ENCODE measurements at regions of chr1 and their contacts with region 1.

Region 1: DNA sequence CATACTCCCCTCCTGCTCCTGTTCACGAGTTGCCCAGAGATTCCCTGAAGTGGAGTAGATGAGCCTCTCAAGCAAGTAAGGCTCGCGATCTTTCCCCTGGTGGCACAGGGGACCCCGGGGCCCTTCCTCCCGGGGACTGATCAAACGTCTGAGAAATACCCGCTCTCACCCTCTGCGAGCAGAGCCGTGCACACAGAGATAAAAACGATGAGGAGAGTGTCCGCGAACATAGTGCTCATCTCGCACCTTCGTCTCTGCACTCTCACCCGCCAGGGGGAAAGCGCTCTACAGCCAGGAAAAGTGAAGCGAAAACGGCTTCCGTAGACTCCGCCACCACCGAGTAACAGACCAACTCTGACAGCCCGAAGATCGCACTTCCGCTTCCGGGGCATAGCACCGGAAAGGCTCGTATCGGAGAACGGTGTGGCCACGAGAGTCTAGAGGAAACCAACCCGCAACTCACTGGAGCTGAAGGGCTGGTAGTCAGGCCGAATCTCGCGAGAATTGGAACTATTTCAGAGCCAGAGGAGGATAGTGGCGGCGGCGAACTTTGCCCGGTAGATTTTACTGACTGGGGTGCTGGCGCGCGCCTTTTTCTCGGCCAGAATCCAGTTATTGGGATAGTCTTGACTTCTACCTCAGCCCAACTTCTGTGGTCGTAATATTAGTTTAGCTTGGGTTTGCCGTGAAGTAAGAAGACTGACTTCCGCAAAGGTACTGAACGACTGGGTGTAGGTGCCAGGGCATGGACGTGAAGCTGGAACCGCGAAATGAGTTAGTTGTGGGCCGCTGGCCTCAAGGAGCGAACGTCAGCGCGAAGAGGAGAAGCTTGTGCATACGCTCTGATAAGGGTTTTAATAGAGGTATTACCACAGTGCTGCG is at the start of gene TMCO1:
- DNase-seq: peak; percentile 87 to 99
- ATAC-seq: peak; percentile 93 to 97 (median 97)
- H3K4me3 ChIP-seq: peak within 1 kb of the TSS; percentile 75
- H3K4me3 Mint-ChIP-seq: peak within 1 kb of the TSS; percentile 98
- H3K27ac ChIP-seq: peak within 1 kb of the TSS; percentile 92
- H3K27ac Mint-ChIP-seq: peak within 1 kb of the TSS; percentile 95 to 98
- H3K4me1 ChIP-seq: peaks cover 12% of the 10 kb centered on the region
- H3K4me1 Mint-ChIP-seq: peaks cover 50 to 54% of the 10 kb centered on the region in 2 donors
- H3K27me3 ChIP-seq: no peaks in the 10 kb centered on the region
- H3K27me3 Mint-ChIP-seq: no peaks in the 10 kb centered on the region
- CTCF ChIP-seq: no peak
- total RNA-seq, gene TMCO1: 45.4 to 52.6 (median 47.6) TPM

Region 2: DNA sequence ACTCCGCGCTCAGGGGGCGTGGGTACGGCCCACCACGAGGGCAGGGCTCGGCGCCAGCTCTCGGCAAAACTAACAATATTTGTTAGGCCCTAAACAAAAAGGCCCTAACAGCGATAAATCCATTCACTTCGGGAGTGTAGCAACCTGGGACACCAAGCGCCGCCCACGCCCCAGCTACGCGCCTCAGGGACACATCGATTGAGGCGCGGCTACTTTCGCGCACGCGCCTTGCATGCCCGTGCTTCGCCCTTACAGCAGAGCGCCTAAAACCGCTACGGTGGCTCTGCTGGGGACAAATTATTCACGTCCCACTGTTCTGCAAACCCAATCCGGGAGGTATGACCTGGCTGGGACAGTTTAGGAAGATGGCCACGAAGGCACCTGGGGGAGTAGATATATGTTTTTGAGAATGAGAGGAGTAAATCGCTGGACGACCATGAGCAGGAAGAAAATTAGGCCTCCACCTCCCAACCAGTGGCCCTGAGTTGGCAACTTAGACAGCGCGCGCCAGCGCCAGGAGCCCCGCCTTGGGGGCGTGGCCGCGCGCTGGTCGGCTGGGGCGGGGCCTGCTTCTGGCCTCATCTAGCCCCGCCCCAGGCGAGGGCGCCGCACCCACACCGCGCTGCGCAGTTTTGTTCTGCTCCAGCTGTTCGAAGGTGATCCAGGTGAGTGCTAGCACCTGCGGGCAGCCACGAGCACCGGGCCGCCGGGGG is 138.0 kb before region 1 on chr1 and contains the start of gene MGST3:
- intact Hi-C with region 1: loop called (anchors 2 kb)
- DNase-seq: peak; percentile 90 to 96
- ATAC-seq: peak; percentile 94 to 99 (median 96)
- H3K4me3 ChIP-seq: peak within 1 kb of the TSS; percentile 64
- H3K4me3 Mint-ChIP-seq: no peak within 1 kb of the TSS
- H3K27ac ChIP-seq: peak within 1 kb of the TSS; percentile 89
- H3K27ac Mint-ChIP-seq: no peak within 1 kb of the TSS
- H3K4me1 ChIP-seq: peaks cover 20% of the 10 kb centered on the region
- H3K4me1 Mint-ChIP-seq: peaks cover 0 to 19% of the 10 kb centered on the region in 2 donors
- H3K27me3 ChIP-seq: no peaks in the 10 kb centered on the region
- H3K27me3 Mint-ChIP-seq: no peaks in the 10 kb centered on the region
- CTCF ChIP-seq: no peak
- total RNA-seq, gene MGST3: 27.2 to 34.3 (median 29.0) TPM

Region 3: GRCh38 chr1:165697881-165698760 is 70.6 kb before region 1 on chr1 and contains the start of gene ALDH9A1:
- intact Hi-C with region 1: loop called (anchors 1 kb)
- DNase-seq: peak; percentile 81 to 87
- ATAC-seq: peak; percentile 88 to 95 (median 90)
- H3K4me3 ChIP-seq: peak within 1 kb of the TSS; percentile 70
- H3K4me3 Mint-ChIP-seq: peak within 1 kb of the TSS; percentile 93
- H3K27ac ChIP-seq: peak within 1 kb of the TSS; percentile 84
- H3K27ac Mint-ChIP-seq: peak within 1 kb of the TSS; percentile 97 to 100
- H3K4me1 ChIP-seq: peaks cover 10% of the 10 kb centered on the region
- H3K4me1 Mint-ChIP-seq: peaks cover 21 to 25% of the 10 kb centered on the region in 2 donors
- H3K27me3 ChIP-seq: no peaks in the 10 kb centered on the region
- H3K27me3 Mint-ChIP-seq: no peaks in the 10 kb centered on the region
- CTCF ChIP-seq: no peak
- total RNA-seq, gene ALDH9A1: 38.0 to 57.1 (median 50.3) TPM

Region 4: DNA sequence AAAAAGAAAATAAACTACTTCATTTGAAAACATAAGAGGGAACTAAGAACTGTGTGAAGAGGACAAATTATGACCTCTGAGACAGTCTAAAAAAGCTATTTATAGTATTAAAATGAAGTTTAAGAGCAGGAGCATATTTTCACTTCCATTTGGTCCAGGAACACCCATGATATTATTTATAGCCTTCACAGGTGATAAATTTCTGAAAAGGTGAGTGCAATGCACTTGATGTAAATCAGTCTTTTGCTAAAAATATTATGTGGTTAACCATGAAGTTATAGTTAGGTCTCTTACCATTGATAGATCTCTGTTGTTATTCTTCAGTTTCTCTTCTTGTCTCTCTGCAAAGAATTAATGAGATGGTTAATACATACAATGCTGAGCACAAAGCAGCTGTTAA is 14.8 kb before region 1 on chr1:
- intact Hi-C with region 1: no loop called
- DNase-seq: no peak
- ATAC-seq: no peak
- H3K4me3 ChIP-seq: no peak overlapping the region
- H3K4me3 Mint-ChIP-seq: no peak overlapping the region
- H3K27ac ChIP-seq: no peak overlapping the region
- H3K27ac Mint-ChIP-seq: peak overlapping the region in 1 of 2 donors; percentile 40
- H3K4me1 ChIP-seq: no peaks in the 10 kb centered on the region
- H3K4me1 Mint-ChIP-seq: peaks cover 12 to 13% of the 10 kb centered on the region in 2 donors
- H3K27me3 ChIP-seq: no peaks in the 10 kb centered on the region
- H3K27me3 Mint-ChIP-seq: no peaks in the 10 kb centered on the region
- CTCF ChIP-seq: no peak

Region 5: GRCh38 chr1:165827268-165828102 is 58.7 kb after region 1 on chr1 and contains the start of gene UCK2:
- intact Hi-C with region 1: loop called (anchors 1 kb)
- DNase-seq: peak; percentile 53 to 69
- ATAC-seq: peak; percentile 72 to 80 (median 76)
- H3K4me3 ChIP-seq: peak within 1 kb of the TSS; percentile 67
- H3K4me3 Mint-ChIP-seq: peak within 1 kb of the TSS; percentile 95
- H3K27ac ChIP-seq: peak within 1 kb of the TSS; percentile 54
- H3K27ac Mint-ChIP-seq: peak within 1 kb of the TSS; percentile 86 to 87
- H3K4me1 ChIP-seq: peaks cover 16% of the 10 kb centered on the region
- H3K4me1 Mint-ChIP-seq: peaks cover 17 to 26% of the 10 kb centered on the region in 2 donors
- H3K27me3 ChIP-seq: no peaks in the 10 kb centered on the region
- H3K27me3 Mint-ChIP-seq: no peaks in the 10 kb centered on the region
- CTCF ChIP-seq: peak; percentile 20
- total RNA-seq, gene UCK2: 12.8 to 20.5 (median 14.4) TPM